Activated CD8-positive, alpha-beta T cell treated with anti-CD3 and anti-CD28 coated beads for 36 hours (primary cell): ENCODE measurements at regions of chr1 and their contacts with region 1.

Region 1: DNA sequence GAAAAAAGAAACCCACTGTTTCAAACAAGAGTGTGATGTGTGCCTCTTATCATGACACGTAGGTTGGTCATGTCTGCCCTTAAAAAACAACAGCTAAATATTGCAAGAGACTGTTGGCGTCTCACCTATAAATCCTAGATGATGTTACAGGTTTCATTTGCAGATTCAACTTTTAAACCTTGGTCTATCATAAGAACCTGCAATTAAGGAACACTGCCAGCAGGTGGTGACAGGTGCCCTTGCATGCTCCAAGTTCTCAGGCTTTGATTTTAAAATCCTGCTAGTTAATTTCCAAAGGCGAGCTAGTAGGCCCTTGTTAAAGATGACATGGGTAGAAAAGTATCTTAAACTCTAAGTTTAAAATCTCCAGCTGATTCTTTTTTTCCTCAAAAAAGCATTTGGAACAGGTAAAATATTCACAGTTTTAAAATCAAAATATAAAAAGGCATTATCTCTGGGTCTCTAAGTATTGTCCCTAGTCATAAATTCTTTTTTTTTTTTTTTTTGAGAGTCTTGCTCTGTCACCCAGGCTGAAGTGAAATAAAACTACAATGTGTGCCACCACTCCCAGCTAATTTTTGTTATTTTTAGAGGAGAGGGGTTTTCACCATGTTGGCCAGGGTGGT is 39.1 kb downstream of the CLSTN1 start:
- DNase-seq: peak; percentile 81
- ATAC-seq: peak; percentile 47
- H3K4me3 Mint-ChIP-seq: no peak overlapping the region
- H3K27ac Mint-ChIP-seq: no peak overlapping the region
- H3K4me1 Mint-ChIP-seq: peaks cover 28% of the 10 kb centered on the region
- H3K27me3 Mint-ChIP-seq: no peaks in the 10 kb centered on the region
- CTCF ChIP-seq: peak; percentile 91

Region 2: GRCh38 chr1:9751971-9752370 is 32.6 kb before region 1 on chr1:
- CTCF ChIA-PET with region 1: no interaction called
- POLR2A ChIA-PET with region 1: no interaction called
- intact Hi-C with region 1: no loop called
- DNase-seq: no peak
- ATAC-seq: no peak
- H3K4me3 Mint-ChIP-seq: no peak overlapping the region
- H3K27ac Mint-ChIP-seq: no peak overlapping the region
- H3K4me1 Mint-ChIP-seq: peaks cover 3% of the 10 kb centered on the region
- H3K27me3 Mint-ChIP-seq: no peaks in the 10 kb centered on the region
- CTCF ChIP-seq: no peak

Region 3: DNA sequence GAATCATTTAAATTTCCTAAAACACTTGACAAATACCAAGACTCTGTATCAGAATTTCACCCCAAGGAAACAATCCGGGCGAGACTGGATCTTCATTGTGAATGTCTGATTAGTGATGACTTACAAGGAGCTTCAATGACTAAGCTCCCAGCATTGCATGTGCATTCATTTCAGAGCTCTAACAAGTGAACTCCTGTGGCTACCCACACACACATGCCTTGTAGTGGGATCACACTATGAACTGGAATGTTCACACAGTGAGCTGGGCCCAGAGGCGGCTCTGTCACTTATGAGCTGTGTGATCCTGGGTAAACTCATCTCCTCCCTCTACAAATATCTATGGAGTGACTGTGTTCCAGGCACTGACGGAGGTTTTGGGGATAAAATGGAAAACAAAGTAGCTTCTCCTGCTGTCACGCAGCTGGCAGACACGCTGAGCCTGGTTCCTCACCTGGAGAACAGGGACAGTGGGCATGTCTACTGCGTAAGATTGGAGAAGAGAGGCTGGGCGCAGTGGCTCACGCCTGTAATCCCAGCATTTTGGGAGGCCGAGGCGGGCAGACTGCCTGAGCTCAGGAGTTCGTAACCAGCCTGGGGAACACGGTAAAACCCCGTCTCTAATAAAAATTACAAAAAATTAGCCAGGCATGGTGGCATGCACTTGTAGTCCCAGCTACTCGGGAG is 17.7 kb before region 1 on chr1:
- CTCF ChIA-PET with region 1: interaction called, 12 read pairs
- POLR2A ChIA-PET with region 1: no interaction called
- intact Hi-C with region 1: no loop called
- DNase-seq: no peak
- ATAC-seq: no peak
- H3K4me3 Mint-ChIP-seq: no peak overlapping the region
- H3K27ac Mint-ChIP-seq: no peak overlapping the region
- H3K4me1 Mint-ChIP-seq: peaks cover 14% of the 10 kb centered on the region
- H3K27me3 Mint-ChIP-seq: no peaks in the 10 kb centered on the region
- CTCF ChIP-seq: no peak

Region 4: GRCh38 chr1:9805006-9805508 is 20.4 kb after region 1 on chr1:
- CTCF ChIA-PET with region 1: interaction called, 47 read pairs
- POLR2A ChIA-PET with region 1: interaction called, 3 read pairs
- intact Hi-C with region 1: no loop called
- DNase-seq: no peak
- ATAC-seq: no peak
- H3K4me3 Mint-ChIP-seq: no peak overlapping the region
- H3K27ac Mint-ChIP-seq: no peak overlapping the region
- H3K4me1 Mint-ChIP-seq: peaks cover 45% of the 10 kb centered on the region
- H3K27me3 Mint-ChIP-seq: no peaks in the 10 kb centered on the region
- CTCF ChIP-seq: no peak

Region 5: GRCh38 chr1:9823943-9824701 is 39.5 kb after region 1 on chr1 and contains the start of gene CLSTN1:
- CTCF ChIA-PET with region 1: interaction called, 36 read pairs
- POLR2A ChIA-PET with region 1: no interaction called
- intact Hi-C with region 1: loop called (anchors 2 kb)
- DNase-seq: peak; percentile 92
- ATAC-seq: peak; percentile 75
- H3K4me3 Mint-ChIP-seq: peak within 1 kb of the TSS; percentile 87
- H3K27ac Mint-ChIP-seq: peak within 1 kb of the TSS; percentile 82
- H3K4me1 Mint-ChIP-seq: peaks cover 35% of the 10 kb centered on the region
- H3K27me3 Mint-ChIP-seq: peaks cover 9% of the 10 kb centered on the region
- CTCF ChIP-seq: no peak
- total RNA-seq, gene CLSTN1: 29.3 to 29.9 TPM

Region 6: DNA sequence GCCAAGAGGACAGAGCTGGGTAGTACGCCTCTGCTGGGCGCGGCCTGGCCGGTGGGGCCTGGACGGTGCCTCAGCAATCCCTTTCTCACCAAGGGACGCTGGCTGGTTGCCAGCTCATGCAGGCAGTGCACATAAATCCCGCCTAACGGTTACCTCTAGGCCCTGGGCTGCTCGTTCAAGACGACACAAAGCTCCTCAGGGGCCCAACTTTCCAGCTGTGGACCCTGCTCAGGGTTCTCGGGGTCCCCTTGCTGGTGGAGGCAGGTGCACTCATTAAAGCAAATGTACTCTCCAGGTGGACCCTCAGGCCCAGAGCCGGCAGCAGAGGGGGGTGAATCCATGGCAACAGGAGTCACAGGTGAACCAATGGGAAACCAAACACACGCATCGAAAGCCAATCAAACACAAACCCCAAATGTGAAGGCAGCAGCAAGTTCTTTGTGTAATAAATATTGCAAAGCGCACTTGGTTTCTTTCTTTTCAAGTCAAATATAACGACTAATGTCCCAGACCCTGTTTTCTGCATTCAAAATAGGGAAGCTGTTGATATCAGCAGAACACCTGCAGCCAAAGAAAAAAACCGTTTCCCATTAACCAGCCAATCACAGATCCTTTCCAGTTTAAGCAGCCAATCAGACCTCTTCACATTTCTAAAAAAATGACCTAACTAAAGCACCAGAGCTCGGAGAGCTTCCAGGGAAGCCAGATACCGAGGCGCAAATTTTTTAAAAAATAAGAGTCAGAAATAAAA is 65.2 kb after region 1 on chr1:
- CTCF ChIA-PET with region 1: interaction called, 53 read pairs
- POLR2A ChIA-PET with region 1: no interaction called
- intact Hi-C with region 1: no loop called
- DNase-seq: no peak
- ATAC-seq: peak; percentile 79
- H3K4me3 Mint-ChIP-seq: peak overlapping the region; percentile 63
- H3K27ac Mint-ChIP-seq: no peak overlapping the region
- H3K4me1 Mint-ChIP-seq: peaks cover 11% of the 10 kb centered on the region
- H3K27me3 Mint-ChIP-seq: peaks cover 2% of the 10 kb centered on the region
- CTCF ChIP-seq: no peak

Region 7: DNA sequence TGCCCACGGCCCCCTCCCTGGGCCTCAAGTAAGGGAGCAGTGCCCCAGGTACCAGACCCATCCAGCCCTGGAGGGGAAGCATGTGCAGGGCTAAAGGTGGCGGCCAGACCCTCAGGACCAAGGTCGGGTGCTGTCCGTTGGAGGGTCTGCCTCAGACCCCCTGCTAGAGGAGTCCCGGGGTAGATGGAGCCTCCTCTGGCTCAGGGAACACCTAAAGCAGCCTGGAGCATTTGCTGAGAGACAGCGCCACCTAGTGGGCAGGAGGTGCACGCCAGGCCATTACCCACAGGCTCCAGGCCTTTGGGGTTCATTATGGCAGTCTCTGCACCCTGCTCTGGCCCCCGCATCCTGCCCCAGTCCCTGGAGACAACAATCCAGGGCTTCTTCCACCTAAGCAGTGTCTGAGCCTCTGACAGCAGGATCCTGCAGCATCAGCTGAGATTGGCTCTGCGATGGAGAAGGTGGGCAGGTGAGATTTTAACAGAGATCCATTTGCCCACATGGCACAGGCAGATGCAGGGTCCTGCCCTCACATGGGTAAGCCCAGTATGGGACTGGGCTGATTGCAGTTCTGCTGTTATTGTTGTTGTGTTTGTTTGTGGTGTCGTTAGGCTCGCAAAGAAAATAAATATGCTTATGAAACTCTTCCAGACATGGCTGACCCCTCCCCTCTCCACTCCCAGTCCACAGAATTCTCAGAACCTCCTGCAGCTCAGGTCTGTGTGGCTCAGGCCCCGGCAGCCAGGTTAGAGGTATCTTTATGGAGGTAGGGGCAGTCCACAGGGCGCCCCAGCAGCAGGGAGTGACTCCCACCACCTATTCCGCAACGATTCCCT is 83.0 kb after region 1 on chr1:
- CTCF ChIA-PET with region 1: interaction called, 273 read pairs
- POLR2A ChIA-PET with region 1: interaction called, 5 read pairs
- intact Hi-C with region 1: loop called (anchors 1 kb)
- DNase-seq: peak; percentile 94
- ATAC-seq: peak; percentile 99
- H3K4me3 Mint-ChIP-seq: no peak overlapping the region
- H3K27ac Mint-ChIP-seq: no peak overlapping the region
- H3K4me1 Mint-ChIP-seq: no peaks in the 10 kb centered on the region
- H3K27me3 Mint-ChIP-seq: no peaks in the 10 kb centered on the region
- CTCF ChIP-seq: peak; percentile 94

Region 8: GRCh38 chr1:9900142-9901043 is 115.8 kb after region 1 on chr1:
- CTCF ChIA-PET with region 1: no interaction called
- POLR2A ChIA-PET with region 1: no interaction called
- intact Hi-C with region 1: no loop called
- DNase-seq: no peak
- ATAC-seq: no peak
- H3K4me3 Mint-ChIP-seq: no peak overlapping the region
- H3K27ac Mint-ChIP-seq: no peak overlapping the region
- H3K4me1 Mint-ChIP-seq: peaks cover 30% of the 10 kb centered on the region
- H3K27me3 Mint-ChIP-seq: no peaks in the 10 kb centered on the region
- CTCF ChIP-seq: no peak

Region 9: GRCh38 chr1:10057343-10057742 is 272.7 kb after region 1 on chr1:
- CTCF ChIA-PET with region 1: no interaction called
- POLR2A ChIA-PET with region 1: no interaction called
- intact Hi-C with region 1: no loop called
- DNase-seq: no peak
- ATAC-seq: no peak
- H3K4me3 Mint-ChIP-seq: no peak overlapping the region
- H3K27ac Mint-ChIP-seq: no peak overlapping the region
- H3K4me1 Mint-ChIP-seq: peaks cover 4% of the 10 kb centered on the region
- H3K27me3 Mint-ChIP-seq: no peaks in the 10 kb centered on the region
- CTCF ChIP-seq: no peak